T-cell (primary cell): ENCODE measurements at regions of chr1 and their contacts with region 1.

Region 1: DNA sequence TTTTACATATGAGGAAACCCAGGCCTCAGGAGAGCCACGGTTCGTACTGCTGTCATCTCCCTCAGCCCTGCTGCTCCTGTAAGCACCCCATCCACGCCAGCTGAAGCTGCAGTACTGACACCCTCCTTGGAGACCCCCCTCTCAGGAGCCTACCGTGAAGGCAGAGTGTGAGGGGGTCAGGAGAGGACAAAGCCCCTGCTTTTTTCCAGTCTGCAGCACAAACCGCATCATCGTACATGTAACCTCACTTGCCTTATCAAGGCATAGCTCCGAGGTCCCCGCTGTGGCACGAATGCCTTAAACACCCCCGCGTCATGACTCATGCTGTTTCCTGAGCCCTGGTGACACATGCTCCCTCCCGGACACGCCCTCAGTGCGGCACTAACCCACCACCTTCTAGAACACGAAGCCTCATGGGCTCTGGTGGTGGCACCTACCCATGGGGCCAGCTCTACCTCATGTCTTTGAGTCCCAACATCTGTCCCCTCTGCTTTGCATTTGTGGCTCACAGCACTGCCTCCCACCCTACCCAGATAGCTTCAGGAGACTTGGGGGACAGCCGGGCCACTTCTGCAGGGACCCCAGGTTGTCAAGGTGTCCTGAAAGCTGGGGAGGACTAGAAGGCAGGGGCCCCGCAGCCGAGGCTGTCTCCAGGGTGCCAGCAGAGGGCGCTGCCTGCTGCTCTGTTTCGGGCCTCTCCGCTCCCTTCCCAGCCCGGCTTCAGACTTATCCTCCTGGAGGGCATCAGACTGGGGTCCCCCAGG is 4.9 kb downstream of the SH3BGRL3 start:
- DNase-seq: peak; percentile 81 to 96 (median 91)
- ATAC-seq: peak; percentile 65 to 76 (median 68)
- H3K4me3 ChIP-seq: peak overlapping the region; percentile 37 to 40
- H3K4me3 Mint-ChIP-seq: peak overlapping the region; percentile 87 to 94 (median 91)
- H3K27ac ChIP-seq: peak overlapping the region; percentile 91
- H3K27ac Mint-ChIP-seq: peak overlapping the region; percentile 99 to 100
- H3K4me1 ChIP-seq: peaks cover 65 to 96% of the 10 kb centered on the region in 2 experiments
- H3K4me1 Mint-ChIP-seq: peaks cover 89 to 92% (median 91%) of the 10 kb centered on the region in 3 donors
- H3K27me3 ChIP-seq: no peaks in the 10 kb centered on the region
- H3K27me3 Mint-ChIP-seq: no peaks in the 10 kb centered on the region

Region 2: GRCh38 chr1:26263212-26263611 is 21.6 kb before region 1 on chr1:
- CTCF ChIA-PET with region 1: no interaction called
- POLR2A ChIA-PET with region 1: no interaction called
- DNase-seq: no peak
- ATAC-seq: no peak
- H3K4me3 ChIP-seq: no peak overlapping the region
- H3K4me3 Mint-ChIP-seq: no peak overlapping the region
- H3K27ac ChIP-seq: no peak overlapping the region
- H3K27ac Mint-ChIP-seq: no peak overlapping the region
- H3K4me1 ChIP-seq: no peaks in the 10 kb centered on the region
- H3K4me1 Mint-ChIP-seq: no peaks in the 10 kb centered on the region
- H3K27me3 ChIP-seq: no peaks in the 10 kb centered on the region
- H3K27me3 Mint-ChIP-seq: no peaks in the 10 kb centered on the region

Region 3: GRCh38 chr1:26306290-26307229 is 21.8 kb after region 1 on chr1 and contains the start of gene UBXN11:
- CTCF ChIA-PET with region 1: interaction called in 1 of 2 experiments, 13 read pairs
- POLR2A ChIA-PET with region 1: interaction called in 1 of 2 experiments, 3 read pairs
- DNase-seq: peak; percentile 75 to 96 (median 90)
- ATAC-seq: peak; percentile 94 to 98 (median 98)
- H3K4me3 ChIP-seq: peak within 1 kb of the TSS; percentile 74 to 79
- H3K4me3 Mint-ChIP-seq: peak within 1 kb of the TSS; percentile 95 to 99 (median 99)
- H3K27ac ChIP-seq: peak within 1 kb of the TSS; percentile 67
- H3K27ac Mint-ChIP-seq: peak within 1 kb of the TSS; percentile 97 to 99
- H3K4me1 ChIP-seq: peaks cover 28 to 42% of the 10 kb centered on the region in 2 experiments
- H3K4me1 Mint-ChIP-seq: peaks cover 30 to 37% (median 32%) of the 10 kb centered on the region in 3 donors
- H3K27me3 ChIP-seq: no peaks in the 10 kb centered on the region
- H3K27me3 Mint-ChIP-seq: no peaks in the 10 kb centered on the region
- total RNA-seq, gene UBXN11: 39.5 to 112 (median 104) TPM

Region 4: GRCh38 chr1:26315874-26316850 is 31.4 kb after region 1 on chr1:
- CTCF ChIA-PET with region 1: interaction called, 7 to 21 read pairs
- POLR2A ChIA-PET with region 1: interaction called, 4 read pairs
- DNase-seq: no peak
- ATAC-seq: no peak
- H3K4me3 ChIP-seq: peak overlapping the region in 1 of 2 donors; percentile 12
- H3K4me3 Mint-ChIP-seq: peak overlapping the region; percentile 18 to 99 (median 63)
- H3K27ac ChIP-seq: peak overlapping the region; percentile 22
- H3K27ac Mint-ChIP-seq: peak overlapping the region; percentile 90 to 92
- H3K4me1 ChIP-seq: peaks cover 41 to 64% of the 10 kb centered on the region in 2 experiments
- H3K4me1 Mint-ChIP-seq: peaks cover 59 to 71% (median 69%) of the 10 kb centered on the region in 3 donors
- H3K27me3 ChIP-seq: no peaks in the 10 kb centered on the region
- H3K27me3 Mint-ChIP-seq: no peaks in the 10 kb centered on the region

Region 5: GRCh38 chr1:26321315-26322041 is 36.7 kb after region 1 on chr1:
- CTCF ChIA-PET with region 1: interaction called, 7 to 21 read pairs
- POLR2A ChIA-PET with region 1: interaction called, 3 to 4 read pairs
- DNase-seq: peak; percentile 81 to 98 (median 93)
- ATAC-seq: peak; percentile 66 to 78 (median 75)
- H3K4me3 ChIP-seq: peak overlapping the region; percentile 41 to 89
- H3K4me3 Mint-ChIP-seq: peak overlapping the region; percentile 88 to 99 (median 99)
- H3K27ac ChIP-seq: peak overlapping the region; percentile 44
- H3K27ac Mint-ChIP-seq: peak overlapping the region; percentile 95 to 99
- H3K4me1 ChIP-seq: peaks cover 26 to 51% of the 10 kb centered on the region in 2 experiments
- H3K4me1 Mint-ChIP-seq: peaks cover 48 to 60% (median 58%) of the 10 kb centered on the region in 3 donors
- H3K27me3 ChIP-seq: no peaks in the 10 kb centered on the region
- H3K27me3 Mint-ChIP-seq: no peaks in the 10 kb centered on the region